ENCODE measurements at regions of chr7 and their contacts with region 1.

Region 1: GRCh38 chr7:105024743-105025142 is 10.7 kb downstream of the KMT2E start:
- H3K4me3 ChIP-seq: no peak overlapping the region
- H3K27ac ChIP-seq: peak overlapping the region; percentile 26; the same call in 1 of the 2 replicates
- H3K4me1 ChIP-seq: peaks cover 42% of the 10 kb centered on the region
- CTCF ChIP-seq: no peak

Region 2: GRCh38 chr7:105013221-105013815 is 11.4 kb before region 1 on chr7:
- CTCF ChIA-PET with region 1: interaction called, 4 read pairs
- POLR2A ChIA-PET with region 1: interaction called, 27 read pairs
- H3K4me3 ChIP-seq: peak overlapping the region; percentile 97
- H3K27ac ChIP-seq: peak overlapping the region; percentile 97
- H3K4me1 ChIP-seq: peaks cover 13% of the 10 kb centered on the region; the same call in 1 of the 2 replicates
- CTCF ChIP-seq: peak; percentile 89